CD14-positive monocyte (primary cell): ENCODE measurements at regions of chr11 and their contacts with region 1.

Region 1: GRCh38 chr11:33039274-33040032 is at the start of gene TCP11L1:
- DNase-seq: no peak
- H3K4me3 ChIP-seq: peak within 1 kb of the TSS; percentile 87 to 100 (median 89)
- H3K4me3 Mint-ChIP-seq: peak within 1 kb of the TSS; percentile 84 to 93
- H3K27ac ChIP-seq: peak within 1 kb of the TSS; percentile 89
- H3K27ac Mint-ChIP-seq: peak within 1 kb of the TSS; percentile 89 to 99 (median 97)
- H3K4me1 ChIP-seq: peaks cover 17 to 20% of the 10 kb centered on the region in 2 donors
- H3K4me1 Mint-ChIP-seq: peaks cover 21% of the 10 kb centered on the region
- H3K27me3 ChIP-seq: no peaks in the 10 kb centered on the region
- H3K27me3 Mint-ChIP-seq: peaks cover 0 to 4% (median 3%) of the 10 kb centered on the region in 3 donors
- CTCF ChIP-seq: no peak
- polyA plus RNA-seq, gene TCP11L1: 5.1 to 11.2 (median 7.0) TPM

Region 2: GRCh38 chr11:32583459-32584271 is 455.8 kb before region 1 on chr11 and contains the start of gene EIF3M:
- intact Hi-C with region 1: loop called in 1 of 2 experiments (anchors 10 kb)
- DNase-seq: peak; percentile 95 to 96 (median 96)
- H3K4me3 ChIP-seq: peak within 1 kb of the TSS; percentile 67 to 80 (median 68)
- H3K4me3 Mint-ChIP-seq: peak within 1 kb of the TSS; percentile 91 to 97
- H3K27ac ChIP-seq: peak within 1 kb of the TSS; percentile 72 to 85
- H3K27ac Mint-ChIP-seq: peak within 1 kb of the TSS; percentile 88 to 96 (median 93)
- H3K4me1 ChIP-seq: peaks cover 37 to 48% of the 10 kb centered on the region in 2 donors
- H3K4me1 Mint-ChIP-seq: peaks cover 39% of the 10 kb centered on the region
- H3K27me3 ChIP-seq: no peaks in the 10 kb centered on the region
- H3K27me3 Mint-ChIP-seq: peaks cover 2 to 4% (median 4%) of the 10 kb centered on the region in 3 donors
- CTCF ChIP-seq: no peak
- polyA plus RNA-seq, gene EIF3M: 248 to 316 (median 315) TPM

Region 3: DNA sequence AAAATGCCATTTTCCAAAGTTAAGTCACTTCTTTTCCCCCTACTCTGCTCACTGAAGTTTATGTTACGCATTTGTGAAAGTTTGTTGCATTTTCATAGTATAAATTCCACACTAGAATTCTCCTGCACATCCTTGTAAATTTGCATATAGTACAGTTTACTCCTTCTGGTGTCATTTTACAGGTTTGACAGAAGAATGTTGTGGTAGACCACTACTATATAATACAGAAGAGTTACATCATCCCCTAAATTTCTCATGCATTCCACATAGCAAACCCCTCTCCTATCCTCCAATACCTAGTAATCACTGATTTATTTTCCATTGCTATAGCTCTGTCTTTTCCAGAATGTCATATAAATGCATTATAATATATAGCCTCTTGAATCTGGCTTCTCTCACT is 309.5 kb before region 1 on chr11:
- intact Hi-C with region 1: no loop called
- DNase-seq: no peak
- H3K4me3 ChIP-seq: no peak overlapping the region
- H3K4me3 Mint-ChIP-seq: no peak overlapping the region
- H3K27ac ChIP-seq: no peak overlapping the region
- H3K27ac Mint-ChIP-seq: no peak overlapping the region
- H3K4me1 ChIP-seq: no peaks in the 10 kb centered on the region
- H3K4me1 Mint-ChIP-seq: no peaks in the 10 kb centered on the region
- H3K27me3 ChIP-seq: no peaks in the 10 kb centered on the region
- H3K27me3 Mint-ChIP-seq: peaks cover 0 to 7% (median 2%) of the 10 kb centered on the region in 3 donors
- CTCF ChIP-seq: no peak

Region 4: GRCh38 chr11:32792948-32793475 is 246.4 kb before region 1 on chr11:
- intact Hi-C with region 1: no loop called
- DNase-seq: peak; percentile 21 to 58 (median 33)
- H3K4me3 ChIP-seq: peak overlapping the region in 2 of 3 experiments; percentile 13 to 55
- H3K4me3 Mint-ChIP-seq: peak overlapping the region in 1 of 2 donors; percentile 75
- H3K27ac ChIP-seq: no peak overlapping the region
- H3K27ac Mint-ChIP-seq: peak overlapping the region in 1 of 7 donors; percentile 23
- H3K4me1 ChIP-seq: peaks cover 7 to 8% of the 10 kb centered on the region in 2 donors
- H3K4me1 Mint-ChIP-seq: peaks cover 4% of the 10 kb centered on the region
- H3K27me3 ChIP-seq: no peaks in the 10 kb centered on the region
- H3K27me3 Mint-ChIP-seq: peaks cover 0 to 2% (median 0%) of the 10 kb centered on the region in 3 donors
- CTCF ChIP-seq: peak; percentile 90

Region 5: GRCh38 chr11:33015621-33016551 is 23.6 kb before region 1 on chr11 and contains the start of gene DEPDC7:
- intact Hi-C with region 1: loop called in 1 of 2 experiments (anchors 2 kb)
- DNase-seq: peak; percentile 78 to 86 (median 79)
- H3K4me3 ChIP-seq: peak within 1 kb of the TSS; percentile 47 to 78 (median 57)
- H3K4me3 Mint-ChIP-seq: peak within 1 kb of the TSS; percentile 87 to 92
- H3K27ac ChIP-seq: no peak within 1 kb of the TSS
- H3K27ac Mint-ChIP-seq: peak within 1 kb of the TSS in 2 of 7 donors; percentile 30 to 61
- H3K4me1 ChIP-seq: peaks cover 24 to 42% of the 10 kb centered on the region in 2 donors
- H3K4me1 Mint-ChIP-seq: peaks cover 29% of the 10 kb centered on the region
- H3K27me3 ChIP-seq: peaks cover 3 to 13% of the 10 kb centered on the region in 2 donors
- H3K27me3 Mint-ChIP-seq: peaks cover 5 to 13% (median 13%) of the 10 kb centered on the region in 3 donors
- CTCF ChIP-seq: no peak
- polyA plus RNA-seq, gene DEPDC7: 0.33 to 0.55 (median 0.48) TPM